ENCODE measurements at regions of chr2 and their contacts with region 1.

Region 1: DNA sequence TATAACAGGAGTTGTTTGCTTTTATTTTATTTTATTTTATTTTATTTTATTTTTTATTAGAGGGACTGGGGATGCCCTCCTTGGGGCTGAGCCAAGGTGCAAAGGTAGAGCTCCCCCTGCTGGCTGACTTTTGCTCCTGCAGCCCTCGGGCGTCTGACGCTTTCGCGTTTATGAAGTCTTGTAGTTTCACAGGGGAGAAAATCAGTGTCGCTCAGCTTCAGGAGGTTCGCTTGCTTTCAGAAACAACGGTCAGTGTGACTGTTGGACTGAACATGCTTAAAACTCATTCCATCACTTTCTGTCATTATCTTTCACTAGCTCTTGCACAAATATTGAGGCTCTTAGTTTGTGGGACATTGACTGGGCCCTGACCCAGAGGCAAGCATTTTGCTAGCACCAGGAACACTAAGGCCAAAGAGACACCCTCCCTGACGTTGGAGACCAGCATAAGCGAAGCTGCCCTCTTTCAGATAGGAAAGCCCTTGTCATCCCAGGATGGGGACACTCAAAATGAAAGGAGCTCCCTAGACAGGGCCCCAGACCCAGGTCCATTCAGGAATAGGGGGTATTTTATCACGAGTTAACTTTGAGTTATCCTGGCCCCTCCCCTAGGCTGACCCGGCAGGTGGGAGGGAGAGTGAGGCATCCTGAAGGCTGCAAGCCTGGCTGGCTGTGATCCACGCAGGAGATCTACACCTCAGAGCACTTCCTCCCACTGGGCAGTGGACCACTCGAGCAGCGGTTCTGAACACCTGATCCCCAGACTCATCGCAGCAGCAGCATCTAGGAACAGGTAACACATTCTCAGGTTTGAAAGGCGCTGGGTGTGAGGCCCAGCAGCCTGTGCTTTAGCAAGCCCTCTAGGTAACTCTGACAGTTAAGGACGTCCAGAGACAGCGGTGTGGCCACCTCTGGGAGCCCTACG is 34.4 kb downstream of the LGALSL start:
- DNase-seq: peak; percentile 68 to 88
- ATAC-seq: peak; percentile 79 to 93 (median 91)
- H3K4me3 ChIP-seq: no peak overlapping the region
- H3K4me3 Mint-ChIP-seq: no peak overlapping the region
- H3K27ac ChIP-seq: no peak overlapping the region
- H3K27ac Mint-ChIP-seq: no peak overlapping the region
- H3K4me1 ChIP-seq: peaks cover 7% of the 10 kb centered on the region
- H3K4me1 Mint-ChIP-seq: peaks cover 0 to 5% of the 10 kb centered on the region in 2 donors
- H3K27me3 ChIP-seq: no peaks in the 10 kb centered on the region
- H3K27me3 Mint-ChIP-seq: peaks cover under 1 to 15% of the 10 kb centered on the region in 2 donors
- CTCF ChIP-seq: peak; percentile 96

Region 2: GRCh38 chr2:64052468-64053241 is 435.7 kb before region 1 on chr2:
- intact Hi-C with region 1: loop called (anchors 1 kb)
- DNase-seq: peak in 1 of 2 donors; percentile 46
- ATAC-seq: no peak
- H3K4me3 ChIP-seq: no peak overlapping the region
- H3K4me3 Mint-ChIP-seq: no peak overlapping the region
- H3K27ac ChIP-seq: no peak overlapping the region
- H3K27ac Mint-ChIP-seq: no peak overlapping the region
- H3K4me1 ChIP-seq: no peaks in the 10 kb centered on the region
- H3K4me1 Mint-ChIP-seq: peaks cover 6 to 7% of the 10 kb centered on the region in 2 donors
- H3K27me3 ChIP-seq: no peaks in the 10 kb centered on the region
- H3K27me3 Mint-ChIP-seq: peaks cover 0 to 5% of the 10 kb centered on the region in 2 donors
- CTCF ChIP-seq: no peak

Region 3: GRCh38 chr2:64453770-64454385 is 34.4 kb before region 1 on chr2 and contains the start of gene LGALSL:
- intact Hi-C with region 1: no loop called
- DNase-seq: peak in 1 of 2 donors; percentile 56
- ATAC-seq: peak; percentile 68 to 72 (median 69)
- H3K4me3 ChIP-seq: peak within 1 kb of the TSS; percentile 10
- H3K4me3 Mint-ChIP-seq: peak within 1 kb of the TSS; percentile 91
- H3K27ac ChIP-seq: no peak within 1 kb of the TSS
- H3K27ac Mint-ChIP-seq: no peak within 1 kb of the TSS
- H3K4me1 ChIP-seq: peaks cover 8% of the 10 kb centered on the region
- H3K4me1 Mint-ChIP-seq: no peaks in the 10 kb centered on the region
- H3K27me3 ChIP-seq: peaks cover 4% of the 10 kb centered on the region
- H3K27me3 Mint-ChIP-seq: peaks cover 19 to 29% of the 10 kb centered on the region in 2 donors
- CTCF ChIP-seq: no peak
- total RNA-seq, gene LGALSL: 1.3 to 8.6 (median 2.0) TPM

Region 4: DNA sequence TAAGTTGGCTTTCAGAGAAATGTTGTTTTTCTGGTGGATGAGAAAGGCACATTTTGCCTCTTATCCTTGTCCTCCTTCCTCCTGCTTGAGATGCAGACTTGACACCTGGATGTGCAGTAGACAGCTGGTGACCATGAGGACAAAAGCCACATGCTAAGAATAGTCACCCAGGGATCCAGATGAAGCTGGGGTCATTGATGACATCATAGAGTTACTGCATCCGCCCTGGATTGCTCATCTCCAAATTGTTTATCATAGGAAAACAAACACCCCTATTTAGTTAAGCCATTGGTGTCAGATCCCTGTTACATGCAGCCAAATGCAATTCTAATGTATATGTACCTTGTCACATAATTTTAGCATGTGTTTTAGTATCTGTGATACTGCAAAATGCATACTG is 484.6 kb after region 1 on chr2:
- intact Hi-C with region 1: no loop called
- DNase-seq: no peak
- ATAC-seq: no peak
- H3K4me3 ChIP-seq: no peak overlapping the region
- H3K4me3 Mint-ChIP-seq: no peak overlapping the region
- H3K27ac ChIP-seq: no peak overlapping the region
- H3K27ac Mint-ChIP-seq: no peak overlapping the region
- H3K4me1 ChIP-seq: no peaks in the 10 kb centered on the region
- H3K4me1 Mint-ChIP-seq: peaks cover 5 to 7% of the 10 kb centered on the region in 2 donors
- H3K27me3 ChIP-seq: no peaks in the 10 kb centered on the region
- H3K27me3 Mint-ChIP-seq: peaks cover 0 to 3% of the 10 kb centered on the region in 2 donors
- CTCF ChIP-seq: no peak